ENCODE measurements at regions of chr15 and their contacts with region 1.

Region 1: GRCh38 chr15:93030430-93031105 is 58.4 kb downstream of the RGMA start:
- DNase-seq: peak; percentile 67 to 69
- H3K4me3 ChIP-seq: no peak overlapping the region
- H3K27ac ChIP-seq: peak overlapping the region in 2 of 3 donors; percentile 66 to 76
- H3K4me1 ChIP-seq: peaks cover 7 to 41% of the 10 kb centered on the region in 2 donors
- H3K27me3 ChIP-seq: no peaks in the 10 kb centered on the region
- CTCF ChIP-seq: peak; percentile 63 to 87 (median 78)
- POLR2A ChIP-seq: no peak

Region 2: DNA sequence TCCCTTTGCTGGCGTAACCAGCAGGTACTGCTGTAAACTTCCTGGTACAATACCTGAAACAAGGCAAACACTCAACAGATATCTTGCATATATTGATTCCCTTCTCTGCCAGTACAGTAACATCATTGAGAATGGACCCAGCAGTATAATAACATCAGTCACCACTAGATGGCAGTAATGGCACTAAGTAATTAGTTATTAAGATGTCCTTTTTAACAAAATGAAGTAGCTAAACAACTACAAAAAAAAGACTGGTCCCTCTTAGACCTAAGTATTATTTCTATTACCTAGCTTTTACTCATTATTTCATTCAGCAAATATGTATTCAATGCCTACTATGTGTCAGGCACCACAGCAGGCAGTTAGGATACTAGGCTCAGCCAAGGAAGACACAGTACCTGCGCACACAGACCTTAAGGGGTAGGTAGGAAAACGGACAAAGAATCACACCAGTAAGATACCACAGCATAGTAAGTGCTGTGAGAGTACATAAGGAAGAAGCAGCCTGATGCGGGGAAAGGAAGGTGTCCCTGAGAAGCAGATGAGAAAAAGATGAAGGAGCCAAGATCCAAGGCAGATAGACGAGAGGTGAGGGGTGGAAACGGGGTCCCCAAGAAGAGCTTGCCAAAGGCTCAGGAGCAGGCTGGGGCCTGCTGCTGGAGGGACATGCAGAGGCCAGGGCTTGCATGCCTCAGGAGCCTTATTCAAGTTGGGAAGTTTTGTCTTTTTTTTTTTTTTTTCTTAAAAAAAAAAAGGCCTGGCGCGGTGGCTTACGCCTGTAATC is 233.2 kb before region 1 on chr15:
- intact Hi-C with region 1: loop called (anchors 10 kb)
- DNase-seq: no peak
- H3K4me3 ChIP-seq: no peak overlapping the region
- H3K27ac ChIP-seq: peak overlapping the region in 2 of 3 donors; percentile 41 to 51
- H3K4me1 ChIP-seq: peaks cover 0 to 10% of the 10 kb centered on the region in 2 donors
- H3K27me3 ChIP-seq: no peaks in the 10 kb centered on the region
- CTCF ChIP-seq: peak; percentile 55 to 85 (median 62)
- POLR2A ChIP-seq: no peak

Region 3: GRCh38 chr15:93087825-93088199 is 57.2 kb after region 1 on chr15:
- intact Hi-C with region 1: no loop called
- DNase-seq: peak; percentile 59 to 65
- H3K4me3 ChIP-seq: peak overlapping the region in 1 of 3 donors; percentile 34
- H3K27ac ChIP-seq: no peak overlapping the region
- H3K4me1 ChIP-seq: peaks cover 0 to 18% of the 10 kb centered on the region in 2 donors
- H3K27me3 ChIP-seq: no peaks in the 10 kb centered on the region
- CTCF ChIP-seq: peak in 5 of 6 experiments; percentile 52 to 93 (median 73)
- POLR2A ChIP-seq: no peak

Region 4: GRCh38 chr15:93997084-93997918 is 966.7 kb after region 1 on chr15:
- intact Hi-C with region 1: loop called (anchors 10 kb)
- DNase-seq: no peak
- H3K4me3 ChIP-seq: no peak overlapping the region
- H3K27ac ChIP-seq: no peak overlapping the region
- H3K4me1 ChIP-seq: no peaks in the 10 kb centered on the region
- H3K27me3 ChIP-seq: no peaks in the 10 kb centered on the region
- CTCF ChIP-seq: peak; percentile 8 to 71 (median 32)
- POLR2A ChIP-seq: no peak

Measured in thyroid gland (tissue), 4 donors.